OCI-LY7 (cell line): ENCODE measurements at regions of chr20 and their contacts with region 1.

Region 1: GRCh38 chr20:44618318-44618731 is 33.2 kb downstream of the ADA start:
- DNase-seq: peak; percentile 34
- H3K4me3 ChIP-seq: peak overlapping the region; percentile 10
- H3K27ac ChIP-seq: peak overlapping the region; percentile 93
- H3K4me1 ChIP-seq: peaks cover 53% of the 10 kb centered on the region
- CTCF ChIP-seq: no peak

Region 2: DNA sequence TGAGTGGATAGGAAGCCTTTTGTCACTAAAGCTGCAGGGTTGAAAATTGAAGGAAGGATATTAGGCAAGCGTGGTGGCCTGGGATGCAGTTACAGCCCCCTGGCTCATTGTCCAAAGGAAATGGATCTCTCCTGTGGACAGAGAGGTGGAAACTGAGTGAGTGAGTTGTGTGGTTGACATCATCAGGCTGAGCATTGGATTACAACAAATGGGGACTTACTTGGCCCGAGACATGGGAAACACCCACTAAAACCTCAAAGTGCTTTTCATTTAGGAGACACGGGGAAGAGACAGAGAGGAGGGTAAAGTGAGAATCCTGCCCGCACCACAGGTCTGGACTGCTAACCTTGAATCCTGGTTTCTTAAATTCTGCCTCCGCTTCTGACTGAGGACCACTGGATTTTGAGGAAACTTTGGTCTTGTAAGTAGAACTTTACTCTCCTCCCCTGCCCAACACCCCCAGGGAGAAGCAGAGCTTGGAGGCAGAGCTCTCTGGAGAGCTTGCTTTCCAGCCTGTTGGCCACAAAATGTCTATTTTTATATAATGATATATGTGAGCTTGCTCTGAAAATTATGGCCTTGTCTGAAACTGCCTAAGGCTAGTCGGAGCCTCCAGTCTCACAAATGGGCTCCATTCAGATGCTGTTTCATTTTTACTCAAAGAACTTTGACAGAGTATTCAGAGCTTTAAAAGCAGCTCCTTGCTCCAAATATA is 35.9 kb before region 1 on chr20 and contains the start of gene PKIG:
- CTCF ChIA-PET with region 1: no interaction called
- POLR2A ChIA-PET with region 1: interaction called, 16 read pairs
- intact Hi-C with region 1: no loop called
- DNase-seq: peak; percentile 48
- H3K4me3 ChIP-seq: peak within 1 kb of the TSS; percentile 72
- H3K27ac ChIP-seq: peak within 1 kb of the TSS; percentile 98
- H3K4me1 ChIP-seq: peaks cover 80% of the 10 kb centered on the region
- CTCF ChIP-seq: no peak
- total RNA-seq, gene PKIG: 37.2 and 46.9 TPM in 2 replicates

Region 3: DNA sequence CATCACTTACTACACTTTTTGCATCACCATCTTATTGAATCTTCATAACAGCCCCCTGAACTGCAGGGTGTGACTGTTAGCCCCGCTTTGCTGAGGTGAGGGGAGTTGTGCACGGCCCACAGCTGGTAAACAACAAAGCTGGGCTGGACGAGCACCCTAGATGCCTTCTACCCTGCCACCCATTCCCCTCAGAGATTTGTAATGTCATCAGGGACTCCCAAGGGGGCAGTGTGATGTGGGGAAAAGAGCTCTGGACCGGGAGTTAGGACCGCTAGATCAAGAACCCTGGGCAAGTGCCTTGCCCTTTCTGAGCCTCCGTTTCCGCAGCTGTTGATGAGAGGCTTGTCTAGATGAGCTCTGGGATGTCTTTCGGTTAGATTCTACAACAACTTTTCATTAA is 15.0 kb before region 1 on chr20:
- CTCF ChIA-PET with region 1: no interaction called
- POLR2A ChIA-PET with region 1: no interaction called
- intact Hi-C with region 1: no loop called
- DNase-seq: no peak
- H3K4me3 ChIP-seq: no peak overlapping the region
- H3K27ac ChIP-seq: no peak overlapping the region
- H3K4me1 ChIP-seq: peaks cover 22% of the 10 kb centered on the region
- CTCF ChIP-seq: peak; percentile 61

Region 4: GRCh38 chr20:44642203-44643153 is 24.2 kb after region 1 on chr20:
- CTCF ChIA-PET with region 1: interaction called, 8 read pairs
- POLR2A ChIA-PET with region 1: interaction called, 14 read pairs
- intact Hi-C with region 1: loop called (anchors 1 kb)
- DNase-seq: peak; percentile 65
- H3K4me3 ChIP-seq: peak overlapping the region; percentile 38
- H3K27ac ChIP-seq: peak overlapping the region; percentile 99
- H3K4me1 ChIP-seq: peaks cover 67% of the 10 kb centered on the region
- CTCF ChIP-seq: peak; percentile 68

Region 5: DNA sequence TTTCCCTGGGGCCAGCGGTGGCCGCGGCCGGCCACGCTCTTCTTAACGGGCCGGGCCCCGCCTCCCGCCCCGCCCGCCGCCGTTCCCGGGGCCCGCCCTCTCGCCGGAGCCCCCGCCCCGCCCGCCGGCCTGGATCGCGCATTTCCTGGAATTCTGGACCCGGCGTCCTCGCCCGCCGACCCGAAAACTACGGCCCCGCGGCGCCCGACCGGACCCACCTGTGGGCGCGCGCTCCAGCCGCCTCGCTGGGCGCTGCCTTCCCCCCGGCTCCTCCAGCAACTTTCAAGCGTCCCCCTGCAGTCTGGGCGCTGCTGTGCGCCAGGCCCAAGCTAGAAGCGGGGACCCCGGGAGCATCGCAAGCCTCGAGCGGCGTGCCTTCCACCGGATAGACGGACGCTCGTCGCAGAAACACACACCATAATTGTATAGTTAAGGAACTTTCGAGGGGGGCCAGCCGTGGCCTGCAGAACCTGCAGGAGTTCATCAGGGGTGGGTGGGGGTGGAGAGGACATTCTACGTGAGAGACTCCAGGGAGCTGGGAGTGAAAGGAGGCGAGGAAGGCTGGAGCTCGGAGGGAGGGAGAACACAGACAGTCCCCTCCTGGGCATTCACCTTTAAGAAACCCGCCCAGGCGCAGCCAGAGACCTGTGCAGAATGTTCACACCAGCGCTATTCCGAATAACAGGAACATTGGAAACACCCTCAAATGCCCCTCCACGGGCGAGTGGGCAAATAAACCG is 33.5 kb after region 1 on chr20 and contains the start of gene ADA:
- CTCF ChIA-PET with region 1: interaction called, 8 read pairs
- POLR2A ChIA-PET with region 1: interaction called, 15 read pairs
- intact Hi-C with region 1: no loop called
- DNase-seq: peak; percentile 78
- H3K4me3 ChIP-seq: peak within 1 kb of the TSS; percentile 95
- H3K27ac ChIP-seq: peak within 1 kb of the TSS; percentile 99
- H3K4me1 ChIP-seq: peaks cover 56% of the 10 kb centered on the region
- CTCF ChIP-seq: no peak
- total RNA-seq, gene ADA: 67.0 and 78.2 TPM in 2 replicates

Region 6: DNA sequence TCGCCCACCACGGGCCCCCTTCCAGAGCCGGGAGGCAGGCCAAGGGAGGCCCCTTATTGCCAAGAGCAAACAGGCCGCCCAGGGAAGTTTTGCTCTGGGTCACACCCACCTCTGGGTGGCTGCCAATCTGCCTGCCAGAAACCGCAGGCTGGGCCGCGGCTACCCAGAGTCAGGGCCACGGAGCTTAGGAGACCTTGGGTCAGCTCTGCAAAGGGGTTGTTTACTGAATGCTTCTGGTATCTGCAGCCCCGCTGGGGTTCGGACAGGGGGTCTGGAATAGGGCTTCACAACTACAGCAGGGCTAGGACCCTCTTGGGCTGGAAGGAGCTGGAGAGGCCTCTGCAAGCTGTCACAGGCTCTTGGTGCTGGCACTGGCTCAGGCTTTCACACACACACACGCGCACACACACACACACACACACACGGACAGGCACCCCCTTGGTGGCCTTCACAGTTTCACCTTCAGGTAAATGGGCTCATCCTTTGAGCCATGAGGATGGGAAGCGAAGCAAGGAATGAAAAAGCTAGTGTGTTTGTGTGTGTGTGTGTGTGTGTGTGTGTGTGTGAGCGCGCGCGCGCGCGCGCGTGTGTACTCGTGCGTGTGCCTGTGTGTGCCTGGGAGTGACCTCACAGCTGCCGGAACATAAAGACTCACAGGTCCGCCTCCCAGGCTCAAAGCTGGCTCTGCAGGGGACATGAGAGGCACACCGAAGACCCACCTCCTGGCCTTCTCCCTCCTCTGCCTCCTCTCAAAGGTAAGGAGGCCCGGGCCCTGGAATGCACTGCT is 96.6 kb after region 1 on chr20 and contains the start of gene CCN5:
- CTCF ChIA-PET with region 1: no interaction called
- POLR2A ChIA-PET with region 1: no interaction called
- intact Hi-C with region 1: no loop called
- DNase-seq: no peak
- H3K4me3 ChIP-seq: no peak within 1 kb of the TSS
- H3K27ac ChIP-seq: no peak within 1 kb of the TSS
- H3K4me1 ChIP-seq: no peaks in the 10 kb centered on the region
- CTCF ChIP-seq: no peak
- total RNA-seq, gene CCN5: not detected in 2 replicates